ENCODE measurements at regions of chr5 and their contacts with region 1.

Region 1: GRCh38 chr5:139968547-139969261 is 74.4 kb downstream of the NRG2 start:
- DNase-seq: peak; percentile 94
- H3K27ac ChIP-seq: no peak overlapping the region
- CTCF ChIP-seq: peak; percentile 100

Region 2: DNA sequence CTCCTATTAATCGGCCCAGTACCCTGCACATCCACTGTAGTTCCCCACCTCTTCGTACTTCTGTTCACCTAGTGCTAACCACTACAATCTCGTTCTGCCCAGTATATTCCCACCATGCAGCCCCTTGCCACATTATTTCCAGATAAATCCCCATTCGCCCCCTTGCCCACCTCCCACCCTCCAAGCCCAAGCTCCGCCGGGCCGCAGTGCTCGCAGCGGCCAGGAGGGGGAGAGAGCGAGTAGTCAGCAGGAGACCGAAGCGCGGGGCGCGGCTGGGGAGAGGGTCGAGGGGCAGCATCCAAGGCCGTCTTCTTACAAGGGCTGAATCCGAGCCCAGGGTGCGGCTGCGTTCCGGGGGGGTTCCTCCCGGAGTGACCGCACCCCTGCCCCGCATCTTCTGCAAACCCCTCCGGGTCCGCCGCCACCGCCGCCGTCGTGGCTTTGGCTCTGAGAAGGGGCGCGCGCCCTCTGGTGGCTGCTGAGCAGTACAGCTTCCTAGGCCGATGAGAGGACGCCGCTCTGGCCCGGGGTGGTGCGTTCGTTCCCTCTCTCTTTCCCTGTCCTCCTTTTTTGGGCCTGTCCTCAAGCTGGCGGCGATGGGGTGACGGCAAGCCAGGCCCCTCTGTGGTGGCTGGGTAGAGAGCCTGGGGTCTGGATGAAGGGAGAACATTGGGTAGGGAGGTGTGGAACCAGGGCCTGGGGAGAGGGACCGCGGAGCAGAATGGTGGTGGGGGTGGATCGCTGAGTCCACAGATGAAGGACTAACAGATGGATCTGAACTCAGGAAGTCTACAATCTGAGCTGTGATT is 203.1 kb before region 1 on chr5:
- CTCF ChIA-PET with region 1: interaction called, 33 read pairs
- POLR2A ChIA-PET with region 1: no interaction called
- DNase-seq: peak; percentile 87
- H3K27ac ChIP-seq: no peak overlapping the region
- CTCF ChIP-seq: peak; percentile 100

Region 3: DNA sequence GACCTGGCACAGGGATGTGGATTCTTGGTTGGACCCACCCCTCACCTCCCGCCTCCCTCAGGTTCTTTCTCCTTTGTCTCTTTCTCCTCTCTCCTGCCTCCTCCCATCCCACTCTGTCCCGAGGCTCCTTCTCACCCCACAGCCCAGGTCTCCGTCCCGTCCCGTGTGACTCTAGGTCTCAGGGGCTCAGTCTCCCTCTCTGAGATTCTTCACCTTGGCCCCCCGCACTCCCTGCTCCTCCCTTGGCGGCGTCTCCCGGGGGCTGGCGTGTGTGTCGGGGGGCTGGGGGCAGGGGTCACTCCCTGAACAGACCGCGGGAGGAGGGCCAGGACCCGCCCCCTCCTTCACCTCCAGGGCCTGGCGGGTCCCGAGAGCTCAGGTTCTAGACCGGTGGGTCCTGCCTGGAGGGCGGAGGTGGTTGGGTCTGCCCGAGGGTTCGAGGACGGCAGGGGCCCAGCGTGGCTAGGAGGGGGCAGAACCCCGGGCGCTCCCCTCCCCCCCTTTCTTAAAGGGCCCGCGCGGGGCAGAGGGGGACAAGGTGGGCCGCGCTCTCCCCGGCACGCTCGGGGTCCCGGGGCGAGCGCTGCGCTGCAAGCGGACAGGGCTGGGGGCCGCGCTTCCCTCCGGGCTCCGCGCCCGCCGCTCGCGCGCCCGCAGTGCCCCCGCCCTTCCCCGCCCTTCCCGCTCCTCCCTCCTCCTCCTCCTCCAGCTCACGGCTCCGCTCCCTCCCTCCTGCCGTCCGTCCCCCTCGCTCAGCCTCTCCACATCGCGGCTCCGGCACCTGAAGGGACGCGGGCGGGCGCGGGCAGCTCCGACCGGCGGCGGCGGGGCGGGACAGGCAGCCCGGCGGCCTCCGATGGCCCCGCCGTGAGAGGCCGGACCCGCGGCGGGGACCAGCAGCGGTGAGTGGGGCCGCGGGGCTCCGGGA is 173.4 kb before region 1 on chr5 and contains the start of gene PSD2:
- CTCF ChIA-PET with region 1: interaction called, 323 read pairs
- POLR2A ChIA-PET with region 1: no interaction called
- DNase-seq: peak; percentile 42
- H3K27ac ChIP-seq: no peak within 1 kb of the TSS
- CTCF ChIP-seq: no peak

Region 4: GRCh38 chr5:139854029-139854605 is 114.6 kb before region 1 on chr5:
- CTCF ChIA-PET with region 1: interaction called, 13 read pairs
- POLR2A ChIA-PET with region 1: no interaction called
- DNase-seq: no peak
- H3K27ac ChIP-seq: no peak overlapping the region
- CTCF ChIP-seq: no peak

Region 5: DNA sequence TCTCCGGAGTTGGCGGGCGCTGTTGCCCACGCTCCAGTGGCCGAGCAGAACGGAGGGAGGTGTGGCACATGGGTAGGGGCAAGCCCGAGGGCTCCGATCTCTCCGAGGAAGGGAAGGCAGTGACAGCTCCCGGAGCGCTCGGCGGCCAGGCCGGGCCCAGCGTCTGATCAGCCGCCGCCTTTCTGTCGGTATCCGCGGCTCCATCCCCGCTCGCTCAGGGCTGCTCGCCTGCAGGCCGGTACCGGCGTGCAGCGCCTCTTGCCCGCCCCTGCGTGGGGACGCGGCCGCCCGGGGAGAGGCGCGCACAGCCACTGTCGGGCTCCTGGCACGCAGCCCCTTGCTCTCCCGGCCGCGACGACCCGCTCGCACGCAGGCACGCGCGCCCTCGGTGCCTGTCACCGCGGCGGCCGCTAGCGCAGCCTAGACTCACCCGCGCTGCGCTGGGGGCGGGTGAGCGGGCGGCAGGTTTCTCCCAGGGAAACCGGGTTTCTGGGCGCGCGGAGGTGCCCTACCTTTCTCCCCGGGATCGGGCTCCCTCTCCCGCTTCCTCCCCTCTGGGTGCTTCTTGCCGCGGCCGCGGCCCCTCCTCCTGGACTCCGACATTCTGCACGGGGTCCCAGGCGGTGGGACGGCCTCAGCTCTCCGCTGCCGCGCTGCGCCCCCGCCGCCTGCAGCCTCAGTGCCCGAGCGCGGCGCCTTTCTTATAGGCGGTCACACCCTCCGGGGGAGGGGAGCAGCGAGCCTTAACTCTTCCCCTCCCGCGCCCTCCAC is 64.7 kb before region 1 on chr5:
- CTCF ChIA-PET with region 1: interaction called, 11 read pairs
- POLR2A ChIA-PET with region 1: no interaction called
- DNase-seq: no peak
- H3K27ac ChIP-seq: no peak overlapping the region
- CTCF ChIP-seq: no peak

Region 6: GRCh38 chr5:139985733-139986132 is 17.0 kb after region 1 on chr5:
- CTCF ChIA-PET with region 1: interaction called, 38 read pairs
- POLR2A ChIA-PET with region 1: no interaction called
- DNase-seq: peak; percentile 99
- H3K27ac ChIP-seq: peak overlapping the region; percentile 80
- CTCF ChIP-seq: no peak

Region 7: DNA sequence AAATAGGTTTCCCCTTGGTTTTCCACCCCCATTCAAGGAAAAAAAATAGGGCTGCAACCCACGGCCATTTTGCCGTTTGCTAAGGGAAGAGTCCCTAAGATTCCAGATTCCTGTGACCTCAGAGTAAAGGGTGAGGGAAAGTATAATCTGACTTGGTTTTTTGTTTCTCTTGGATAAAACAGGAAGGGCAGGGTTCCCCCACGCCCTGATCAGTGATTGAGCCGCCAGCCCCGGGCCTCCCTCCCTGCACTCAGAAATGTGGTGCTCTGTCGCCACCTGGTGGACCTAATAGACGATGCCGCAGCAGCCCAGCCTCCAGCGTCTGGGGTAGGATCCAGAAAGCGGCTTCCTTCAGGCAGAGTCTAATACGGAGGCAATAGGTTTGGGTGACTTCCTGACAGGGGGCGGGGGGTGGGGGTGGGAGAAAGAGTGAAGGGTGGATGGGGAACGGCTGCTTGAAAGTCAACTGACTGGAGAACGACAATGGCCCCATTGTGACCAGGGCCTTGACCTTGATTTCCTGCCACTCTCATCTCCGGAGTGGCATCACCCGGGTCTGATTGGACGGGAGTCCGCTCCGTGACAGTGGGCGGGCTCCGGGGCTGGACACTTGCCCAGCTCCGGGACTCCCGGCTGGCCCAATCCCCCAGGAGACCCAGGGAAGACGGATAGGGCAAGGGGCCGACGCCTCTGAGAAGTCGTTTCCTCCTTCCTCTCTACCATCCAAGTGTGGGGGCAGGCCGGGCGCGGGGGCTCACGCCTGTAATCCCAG is 188.5 kb after region 1 on chr5:
- CTCF ChIA-PET with region 1: interaction called, 18 read pairs
- POLR2A ChIA-PET with region 1: no interaction called
- DNase-seq: peak; percentile 96
- H3K27ac ChIP-seq: no peak overlapping the region
- CTCF ChIP-seq: peak; percentile 94